Activated CD8-positive, alpha-beta T cell treated with anti-CD3 and anti-CD28 coated beads for 36 hours (primary cell): ENCODE measurements at regions of chr6 and their contacts with region 1.

Region 1: DNA sequence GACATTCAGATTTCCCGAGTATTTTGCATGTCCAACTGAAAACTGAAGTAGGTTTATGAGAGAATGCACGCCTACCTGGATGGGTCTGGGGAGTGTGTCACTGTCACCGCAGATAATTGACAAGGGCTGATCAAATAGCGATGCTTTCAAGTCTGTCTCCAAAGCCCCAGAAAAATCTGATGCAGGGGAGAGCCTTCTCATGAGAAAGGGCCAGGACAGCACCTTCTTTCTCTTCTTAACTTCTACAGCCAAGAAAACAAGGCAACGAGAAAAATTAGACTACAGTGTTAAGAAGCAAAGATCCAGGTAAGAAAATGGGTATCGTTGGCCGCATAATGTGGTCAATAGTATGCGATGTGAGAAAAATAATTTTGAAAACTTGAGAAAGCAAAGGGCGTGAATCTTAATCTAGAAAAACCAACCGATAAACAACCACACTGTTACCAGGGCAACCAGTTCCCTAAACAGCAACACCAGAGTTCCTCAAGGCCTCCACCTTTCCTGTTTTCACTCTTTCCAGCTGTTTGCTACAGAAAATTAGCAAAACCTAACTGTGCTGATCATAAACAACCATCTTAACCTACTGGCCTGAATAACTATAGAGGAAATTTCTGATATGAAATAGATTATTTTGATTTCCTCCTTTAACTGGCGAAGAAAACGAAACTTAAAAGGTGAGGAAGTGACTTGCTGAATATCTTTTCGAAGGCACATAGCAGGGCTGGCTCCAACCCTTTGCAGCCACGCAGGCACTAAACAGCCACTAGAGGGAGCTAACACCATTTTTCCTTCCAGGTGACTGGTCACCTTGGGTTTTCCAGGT is 2.6 kb downstream of the TAGAP start:
- DNase-seq: peak; percentile 82
- ATAC-seq: peak; percentile 21
- H3K4me3 Mint-ChIP-seq: peak overlapping the region; percentile 100
- H3K27ac Mint-ChIP-seq: peak overlapping the region; percentile 100
- H3K4me1 Mint-ChIP-seq: peaks cover 53% of the 10 kb centered on the region
- H3K27me3 Mint-ChIP-seq: no peaks in the 10 kb centered on the region
- CTCF ChIP-seq: peak; percentile 96

Region 2: GRCh38 chr6:158686791-158687381 is 355.3 kb before region 1 on chr6:
- CTCF ChIA-PET with region 1: no interaction called
- POLR2A ChIA-PET with region 1: no interaction called
- intact Hi-C with region 1: no loop called
- DNase-seq: peak; percentile 49
- ATAC-seq: peak; percentile 87
- H3K4me3 Mint-ChIP-seq: no peak overlapping the region
- H3K27ac Mint-ChIP-seq: peak overlapping the region; percentile 26
- H3K4me1 Mint-ChIP-seq: peaks cover 59% of the 10 kb centered on the region
- H3K27me3 Mint-ChIP-seq: no peaks in the 10 kb centered on the region
- CTCF ChIP-seq: no peak

Region 3: DNA sequence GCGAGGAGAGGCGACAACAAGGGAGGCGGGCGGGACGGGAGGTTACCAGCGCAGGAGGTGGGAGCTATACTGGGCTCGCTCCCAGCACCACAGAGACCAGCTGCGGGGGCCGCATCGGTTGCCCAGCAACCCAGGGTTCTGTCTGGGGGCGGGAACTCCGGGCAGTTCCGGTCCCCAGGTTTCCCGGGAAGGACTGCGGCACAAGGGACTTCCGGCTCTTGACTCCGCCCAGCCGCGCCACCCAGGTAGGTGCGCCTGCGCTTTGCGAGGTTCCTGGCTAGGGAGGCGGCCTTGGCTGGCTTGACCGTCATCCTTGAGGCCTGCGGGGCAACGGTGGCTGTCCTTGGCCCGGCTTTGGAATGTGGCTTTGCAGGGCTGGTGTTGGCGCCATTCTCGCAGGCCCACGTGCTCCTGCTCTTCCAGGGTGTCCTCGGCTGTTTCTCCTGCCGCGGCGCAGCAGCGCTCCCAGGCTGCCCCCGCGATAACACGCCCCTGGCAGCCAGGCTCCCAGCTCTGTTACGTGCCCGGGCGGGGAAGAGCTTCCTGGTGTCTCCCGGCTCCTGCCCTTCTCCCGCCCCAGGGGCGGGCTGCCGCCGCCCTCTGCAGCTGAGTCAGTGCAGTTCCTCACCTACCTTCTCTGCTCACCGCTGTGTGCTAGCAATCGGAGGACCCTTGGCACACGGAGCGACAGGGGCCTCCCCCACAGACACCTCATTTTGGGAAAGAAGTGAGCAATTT is 42.4 kb before region 1 on chr6 and contains the start of gene RSPH3:
- CTCF ChIA-PET with region 1: interaction called, 10 read pairs
- POLR2A ChIA-PET with region 1: interaction called, 14 read pairs
- intact Hi-C with region 1: loop called (anchors 5 kb)
- DNase-seq: peak; percentile 96
- ATAC-seq: peak; percentile 89
- H3K4me3 Mint-ChIP-seq: peak within 1 kb of the TSS; percentile 83
- H3K27ac Mint-ChIP-seq: peak within 1 kb of the TSS; percentile 81
- H3K4me1 Mint-ChIP-seq: peaks cover 42% of the 10 kb centered on the region
- H3K27me3 Mint-ChIP-seq: no peaks in the 10 kb centered on the region
- CTCF ChIP-seq: no peak
- total RNA-seq, gene RSPH3: 4.2 TPM

Region 4: DNA sequence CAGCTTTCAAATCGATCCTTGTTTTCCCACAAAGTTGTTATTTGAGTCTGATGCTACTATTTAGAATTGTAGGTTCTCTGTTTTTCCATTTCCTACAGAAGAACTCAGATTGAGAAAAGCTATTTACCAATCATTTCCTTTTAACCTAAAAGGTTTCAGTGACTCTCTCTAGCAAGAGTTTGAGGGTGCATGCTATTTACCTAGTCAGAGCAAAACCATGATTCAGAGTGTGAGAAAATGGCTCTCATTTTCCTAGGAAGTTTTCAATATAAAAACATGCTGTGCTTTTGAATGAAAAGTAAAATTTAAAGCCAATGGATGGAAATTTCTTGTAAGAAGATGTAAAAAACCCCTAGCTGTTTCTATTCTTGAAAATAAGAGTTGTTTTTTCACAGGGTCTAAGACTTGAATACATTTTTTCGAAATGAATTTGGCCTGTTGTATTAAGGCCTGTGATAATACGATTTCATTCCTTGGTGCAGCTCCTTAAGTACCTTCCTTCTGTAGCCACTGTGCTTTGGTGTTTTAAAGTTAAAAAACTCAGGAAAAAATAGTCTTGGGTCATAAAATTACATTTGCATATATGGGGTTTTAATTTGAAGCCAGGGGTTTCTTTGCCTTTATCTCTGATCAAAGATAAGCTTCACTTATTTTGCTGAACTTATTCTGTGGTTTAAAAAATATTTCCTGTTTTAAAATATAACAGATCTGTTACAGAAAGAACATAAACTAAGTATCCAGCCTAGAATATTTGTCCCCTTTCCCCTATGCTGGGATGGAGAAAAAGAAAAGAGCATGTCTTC is 24.3 kb before region 1 on chr6:
- CTCF ChIA-PET with region 1: interaction called, 34 read pairs
- POLR2A ChIA-PET with region 1: interaction called, 196 read pairs
- intact Hi-C with region 1: loop called (anchors 2 kb)
- DNase-seq: no peak
- ATAC-seq: peak; percentile 85
- H3K4me3 Mint-ChIP-seq: peak overlapping the region; percentile 14
- H3K27ac Mint-ChIP-seq: peak overlapping the region; percentile 96
- H3K4me1 Mint-ChIP-seq: peaks cover 68% of the 10 kb centered on the region
- H3K27me3 Mint-ChIP-seq: no peaks in the 10 kb centered on the region
- CTCF ChIP-seq: no peak

Region 5: GRCh38 chr6:159062564-159062945 is 20.3 kb after region 1 on chr6:
- CTCF ChIA-PET with region 1: interaction called, 29 read pairs
- POLR2A ChIA-PET with region 1: interaction called, 327 read pairs
- intact Hi-C with region 1: loop called (anchors 2 kb)
- DNase-seq: peak; percentile 84
- ATAC-seq: peak; percentile 79
- H3K4me3 Mint-ChIP-seq: peak overlapping the region; percentile 42
- H3K27ac Mint-ChIP-seq: peak overlapping the region; percentile 95
- H3K4me1 Mint-ChIP-seq: peaks cover 98% of the 10 kb centered on the region
- H3K27me3 Mint-ChIP-seq: no peaks in the 10 kb centered on the region
- CTCF ChIP-seq: no peak

Region 6: DNA sequence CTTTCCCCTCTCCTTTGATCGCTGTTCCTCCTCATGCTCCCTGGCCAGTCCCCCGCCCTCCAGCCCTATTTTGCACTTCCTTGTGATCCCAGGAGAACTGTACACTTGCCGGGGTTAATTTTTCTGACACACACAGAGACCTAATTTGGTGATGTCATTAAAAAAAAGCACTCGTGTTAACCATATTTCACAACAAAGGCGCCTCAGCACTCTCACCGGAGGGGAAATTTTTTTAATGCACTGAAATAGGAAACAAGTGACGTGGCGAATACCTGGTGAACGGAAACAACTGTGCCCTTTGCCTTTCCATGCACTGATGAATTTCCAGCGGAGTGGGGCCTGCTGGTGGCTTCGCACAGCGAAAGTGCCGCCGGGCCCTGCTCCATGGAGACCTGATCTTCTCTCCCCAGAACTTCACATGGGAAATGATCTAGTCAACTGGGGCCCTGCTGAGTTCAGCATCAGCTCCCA is 56.5 kb after region 1 on chr6:
- CTCF ChIA-PET with region 1: interaction called, 289 read pairs
- POLR2A ChIA-PET with region 1: interaction called, 766 read pairs
- intact Hi-C with region 1: loop called (anchors 1 kb)
- DNase-seq: peak; percentile 84
- ATAC-seq: peak; percentile 43
- H3K4me3 Mint-ChIP-seq: peak overlapping the region; percentile 69
- H3K27ac Mint-ChIP-seq: peak overlapping the region; percentile 96
- H3K4me1 Mint-ChIP-seq: peaks cover 93% of the 10 kb centered on the region
- H3K27me3 Mint-ChIP-seq: no peaks in the 10 kb centered on the region
- CTCF ChIP-seq: no peak

Region 7: GRCh38 chr6:159252955-159253508 is 210.8 kb after region 1 on chr6:
- CTCF ChIA-PET with region 1: no interaction called
- POLR2A ChIA-PET with region 1: no interaction called
- intact Hi-C with region 1: no loop called
- DNase-seq: peak; percentile 3
- ATAC-seq: peak; percentile 72
- H3K4me3 Mint-ChIP-seq: no peak overlapping the region
- H3K27ac Mint-ChIP-seq: no peak overlapping the region
- H3K4me1 Mint-ChIP-seq: peaks cover 1% of the 10 kb centered on the region
- H3K27me3 Mint-ChIP-seq: peaks cover 9% of the 10 kb centered on the region
- CTCF ChIP-seq: peak; percentile 68

Region 8: DNA sequence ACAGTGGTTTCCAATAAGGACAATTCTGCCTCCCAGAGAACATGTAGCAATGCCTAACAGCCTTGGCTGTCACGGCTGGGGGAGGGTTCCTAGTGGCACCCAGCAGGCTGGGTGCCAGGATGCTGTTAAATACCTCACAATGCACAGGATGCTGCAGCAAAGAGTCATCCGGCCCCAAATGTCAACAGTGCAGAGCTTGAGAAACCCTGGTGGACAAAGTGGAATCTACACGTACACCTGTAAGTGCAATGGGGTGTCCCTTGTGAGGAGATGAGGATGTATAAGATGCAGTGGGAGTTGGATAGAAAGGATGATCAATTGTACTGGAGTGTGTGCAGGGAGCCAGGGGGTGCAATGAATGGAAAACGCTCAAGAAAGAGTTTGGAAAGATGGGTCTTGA is 269.4 kb after region 1 on chr6:
- CTCF ChIA-PET with region 1: no interaction called
- POLR2A ChIA-PET with region 1: no interaction called
- intact Hi-C with region 1: no loop called
- DNase-seq: no peak
- ATAC-seq: no peak
- H3K4me3 Mint-ChIP-seq: no peak overlapping the region
- H3K27ac Mint-ChIP-seq: no peak overlapping the region
- H3K4me1 Mint-ChIP-seq: no peaks in the 10 kb centered on the region
- H3K27me3 Mint-ChIP-seq: peaks cover 3% of the 10 kb centered on the region
- CTCF ChIP-seq: no peak

Region 9: GRCh38 chr6:159463119-159463829 is 421.1 kb after region 1 on chr6:
- CTCF ChIA-PET with region 1: no interaction called
- POLR2A ChIA-PET with region 1: no interaction called
- intact Hi-C with region 1: no loop called
- DNase-seq: no peak
- ATAC-seq: no peak
- H3K4me3 Mint-ChIP-seq: no peak overlapping the region
- H3K27ac Mint-ChIP-seq: no peak overlapping the region
- H3K4me1 Mint-ChIP-seq: no peaks in the 10 kb centered on the region
- H3K27me3 Mint-ChIP-seq: peaks cover 7% of the 10 kb centered on the region
- CTCF ChIP-seq: no peak